ENCODE measurements at regions of chr15 and their contacts with region 1.

Region 1: DNA sequence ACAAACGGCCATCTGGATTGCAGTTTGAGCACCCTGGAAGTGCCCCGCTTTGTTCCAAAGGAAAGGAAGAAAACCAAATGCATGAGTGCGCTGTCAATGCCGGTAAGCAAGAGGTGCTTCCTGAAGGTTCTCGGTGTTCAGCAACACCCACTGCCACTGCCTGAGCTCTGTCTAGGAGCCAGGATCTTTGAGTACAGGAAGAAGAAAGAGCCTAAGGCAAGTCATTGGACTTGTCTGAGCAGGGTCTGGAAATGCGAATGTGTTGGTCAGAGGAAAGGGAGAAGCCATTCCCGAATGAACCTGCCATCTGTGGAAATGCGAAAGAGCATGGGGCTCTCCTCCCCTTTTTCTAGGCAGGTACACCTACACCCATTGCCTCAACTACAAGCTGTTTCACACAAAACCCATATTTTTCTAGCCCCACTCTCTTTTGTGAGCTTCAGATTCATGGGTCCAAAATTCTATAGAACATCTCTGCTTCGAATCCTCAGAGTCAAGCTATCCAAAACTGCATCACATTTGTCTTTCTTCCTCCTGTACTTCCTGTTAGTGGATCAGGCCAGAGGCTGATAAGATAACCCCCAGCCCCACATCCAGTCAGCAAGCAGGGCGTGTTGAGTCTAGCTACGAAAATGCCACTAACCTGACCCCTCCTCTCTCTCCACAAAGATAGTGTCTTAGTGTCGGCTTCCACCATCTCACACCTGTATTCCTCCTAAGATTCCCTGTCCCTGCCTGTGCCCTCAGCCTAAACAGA is 55.6 kb upstream of the C15orf61 start:
- H3K4me3 ChIP-seq: no peak overlapping the region
- H3K27ac ChIP-seq: no peak overlapping the region
- H3K4me1 ChIP-seq: no peaks in the 10 kb centered on the region
- CTCF ChIP-seq: no peak

Region 2: DNA sequence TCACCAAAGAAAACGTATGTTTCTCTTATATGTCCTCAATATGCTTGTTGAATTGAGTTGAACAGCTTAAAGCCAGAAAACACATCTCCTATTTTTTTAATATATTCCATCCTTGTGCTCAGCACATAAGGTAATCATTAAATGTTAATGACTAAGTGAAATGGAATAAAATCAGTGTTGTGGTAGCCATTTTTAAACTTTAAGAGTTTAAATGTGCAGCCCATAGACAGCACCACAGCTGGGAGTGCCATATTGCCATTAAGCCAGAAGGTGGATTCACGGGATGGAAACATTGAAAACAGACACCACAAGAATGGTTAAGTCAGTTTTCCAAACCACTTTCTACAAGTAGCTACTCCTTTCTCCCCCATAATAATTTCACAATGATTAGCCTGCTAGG is 21.3 kb before region 1 on chr15:
- CTCF ChIA-PET with region 1: no interaction called
- POLR2A ChIA-PET with region 1: no interaction called
- H3K4me3 ChIP-seq: no peak overlapping the region
- H3K27ac ChIP-seq: no peak overlapping the region
- H3K4me1 ChIP-seq: no peaks in the 10 kb centered on the region
- CTCF ChIP-seq: no peak

Region 3: GRCh38 chr15:67836477-67836876 is 371.1 kb after region 1 on chr15:
- CTCF ChIA-PET with region 1: interaction called, 59 read pairs
- POLR2A ChIA-PET with region 1: no interaction called
- H3K4me3 ChIP-seq: no peak overlapping the region
- H3K27ac ChIP-seq: no peak overlapping the region
- H3K4me1 ChIP-seq: no peaks in the 10 kb centered on the region; the same call in 1 of the 2 replicates
- CTCF ChIP-seq: peak; percentile 59; the same call in 1 of the 2 replicates

Measured in HEK293 (cell line).